ENCODE measurements at regions of chr14 and their contacts with region 1.

Region 1: GRCh38 chr14:54329082-54329695 is 67.6 kb upstream of the CDKN3 start:
- DNase-seq: no peak
- H3K4me3 ChIP-seq: no peak overlapping the region
- H3K27ac ChIP-seq: no peak overlapping the region
- H3K4me1 ChIP-seq: peaks cover 0 to 5% (median 2%) of the 10 kb centered on the region in 4 donors
- H3K27me3 ChIP-seq: no peaks in the 10 kb centered on the region
- CTCF ChIP-seq: peak; percentile 31 to 60 (median 38)
- EP300 ChIP-seq: no peak
- POLR2A ChIP-seq: no peak

Region 2: GRCh38 chr14:53549956-53550355 is 779.2 kb before region 1 on chr14:
- intact Hi-C with region 1: loop called (anchors 5 kb)
- DNase-seq: no peak
- H3K4me3 ChIP-seq: no peak overlapping the region
- H3K27ac ChIP-seq: no peak overlapping the region
- H3K4me1 ChIP-seq: no peaks in the 10 kb centered on the region
- H3K27me3 ChIP-seq: no peaks in the 10 kb centered on the region
- CTCF ChIP-seq: no peak
- EP300 ChIP-seq: no peak
- POLR2A ChIP-seq: no peak